ENCODE measurements at regions of chr13 and their contacts with region 1.

Region 1: GRCh38 chr13:46553886-46554858 is 1.2 kb downstream of the LRCH1 start:
- DNase-seq: peak; percentile 95
- ATAC-seq: peak; percentile 67
- H3K4me3 ChIP-seq: peak overlapping the region; percentile 71
- H3K27ac ChIP-seq: peak overlapping the region; percentile 89
- H3K4me1 ChIP-seq: peaks cover 4% of the 10 kb centered on the region
- H3K27me3 ChIP-seq: no peaks in the 10 kb centered on the region
- CTCF ChIP-seq: no peak
- POLR2A ChIP-seq: peak; percentile 38; the same call in 1 of the 2 replicates
- RAD21 ChIP-seq: no peak

Region 2: GRCh38 chr13:46492946-46493345 is 61.2 kb before region 1 on chr13:
- CTCF ChIA-PET with region 1: interaction called, 3 read pairs
- POLR2A ChIA-PET with region 1: no interaction called
- dilution Hi-C with region 1: no loop called
- in situ Hi-C with region 1: no loop called
- intact Hi-C with region 1: loop called (anchors 1 kb)
- DNase-seq: peak; percentile 48
- ATAC-seq: peak; percentile 60
- H3K4me3 ChIP-seq: no peak overlapping the region
- H3K27ac ChIP-seq: no peak overlapping the region
- H3K4me1 ChIP-seq: peaks cover 2% of the 10 kb centered on the region; the same call in 1 of the 2 replicates
- H3K27me3 ChIP-seq: peaks cover 2% of the 10 kb centered on the region
- CTCF ChIP-seq: peak; percentile 68
- POLR2A ChIP-seq: no peak
- RAD21 ChIP-seq: peak; percentile 80

Region 3: DNA sequence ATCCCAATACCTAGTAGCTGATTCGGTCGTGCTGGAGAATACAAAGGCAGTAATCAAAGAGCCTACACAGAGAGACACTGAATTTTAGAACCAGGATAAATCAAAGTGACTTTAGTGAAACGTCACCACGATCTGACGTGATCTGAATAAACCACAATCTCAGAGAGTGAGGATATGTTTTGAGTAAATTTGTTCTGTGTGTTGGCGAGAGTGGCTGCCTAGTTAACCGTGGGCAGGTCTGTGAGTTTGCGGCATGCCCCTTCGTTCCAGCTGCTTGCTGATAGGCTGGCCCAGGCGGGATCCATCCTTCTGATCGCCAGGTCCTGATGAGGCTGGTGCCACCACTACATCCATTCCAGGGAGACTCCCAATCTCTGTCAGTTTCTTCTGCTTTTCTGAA is 39.2 kb after region 1 on chr13:
- CTCF ChIA-PET with region 1: interaction called, 3 read pairs
- POLR2A ChIA-PET with region 1: no interaction called
- dilution Hi-C with region 1: no loop called
- in situ Hi-C with region 1: no loop called
- intact Hi-C with region 1: loop called (anchors 5 kb)
- DNase-seq: no peak
- ATAC-seq: no peak
- H3K4me3 ChIP-seq: no peak overlapping the region
- H3K27ac ChIP-seq: no peak overlapping the region
- H3K4me1 ChIP-seq: peaks cover 5% of the 10 kb centered on the region
- H3K27me3 ChIP-seq: no peaks in the 10 kb centered on the region
- CTCF ChIP-seq: no peak
- POLR2A ChIP-seq: no peak
- RAD21 ChIP-seq: no peak

Region 4: GRCh38 chr13:46614582-46614981 is 60.4 kb after region 1 on chr13:
- CTCF ChIA-PET with region 1: interaction called, 5 read pairs
- POLR2A ChIA-PET with region 1: no interaction called
- dilution Hi-C with region 1: no loop called
- in situ Hi-C with region 1: loop called (anchors 5 kb)
- intact Hi-C with region 1: loop called (anchors 1 kb)
- DNase-seq: peak; percentile 93
- ATAC-seq: peak; percentile 44; the same call in 1 of the 2 replicates
- H3K4me3 ChIP-seq: no peak overlapping the region
- H3K27ac ChIP-seq: no peak overlapping the region
- H3K4me1 ChIP-seq: peaks cover 16% of the 10 kb centered on the region
- H3K27me3 ChIP-seq: no peaks in the 10 kb centered on the region
- CTCF ChIP-seq: peak; percentile 42
- POLR2A ChIP-seq: no peak
- RAD21 ChIP-seq: no peak; the same call in 1 of the 2 replicates

Region 5: GRCh38 chr13:46679369-46680120 is 125.4 kb after region 1 on chr13:
- CTCF ChIA-PET with region 1: interaction called, 3 read pairs
- POLR2A ChIA-PET with region 1: no interaction called
- dilution Hi-C with region 1: no loop called
- in situ Hi-C with region 1: loop called (anchors 10 kb)
- intact Hi-C with region 1: loop called (anchors 5 kb)
- DNase-seq: peak; percentile 70
- ATAC-seq: peak; percentile 78
- H3K4me3 ChIP-seq: peak overlapping the region; percentile 42; the same call in 1 of the 2 replicates
- H3K27ac ChIP-seq: peak overlapping the region; percentile 46; the same call in 1 of the 2 replicates
- H3K4me1 ChIP-seq: peaks cover 9% of the 10 kb centered on the region
- H3K27me3 ChIP-seq: no peaks in the 10 kb centered on the region
- CTCF ChIP-seq: peak; percentile 24
- POLR2A ChIP-seq: no peak
- RAD21 ChIP-seq: no peak; the same call in 1 of the 2 replicates

Region 6: DNA sequence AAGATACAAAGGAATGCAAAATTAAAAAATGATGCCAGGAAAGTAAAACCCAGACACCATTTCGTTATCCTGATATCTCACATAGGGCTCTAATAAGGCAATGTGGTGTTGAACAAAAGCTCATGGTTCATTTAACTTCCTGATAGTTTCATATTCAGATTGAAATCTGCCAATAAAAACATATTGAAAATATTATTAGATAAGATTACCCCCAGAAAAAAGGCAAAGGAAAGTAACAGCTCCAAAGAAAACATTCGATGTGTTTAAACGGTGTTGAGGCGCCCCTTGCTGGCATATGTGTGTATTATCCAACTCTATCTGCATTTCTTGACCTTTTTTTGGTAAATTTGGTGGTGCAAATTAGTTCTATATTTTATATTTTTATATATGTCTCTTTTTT is 166.9 kb after region 1 on chr13:
- CTCF ChIA-PET with region 1: interaction called, 17 read pairs
- POLR2A ChIA-PET with region 1: no interaction called
- dilution Hi-C with region 1: no loop called
- in situ Hi-C with region 1: no loop called
- intact Hi-C with region 1: loop called (anchors 1 kb)
- DNase-seq: peak; percentile 53
- ATAC-seq: peak; percentile 74
- H3K4me3 ChIP-seq: no peak overlapping the region
- H3K27ac ChIP-seq: no peak overlapping the region
- H3K4me1 ChIP-seq: peaks cover 1% of the 10 kb centered on the region; the same call in 1 of the 2 replicates
- H3K27me3 ChIP-seq: no peaks in the 10 kb centered on the region
- CTCF ChIP-seq: peak; percentile 76
- POLR2A ChIP-seq: no peak
- RAD21 ChIP-seq: peak; percentile 86

Region 7: GRCh38 chr13:46796515-46797474 is 242.6 kb after region 1 on chr13 and contains the start of gene ESD:
- CTCF ChIA-PET with region 1: no interaction called
- POLR2A ChIA-PET with region 1: no interaction called
- dilution Hi-C with region 1: no loop called
- in situ Hi-C with region 1: no loop called
- intact Hi-C with region 1: loop called (anchors 1 kb)
- DNase-seq: peak; percentile 87
- ATAC-seq: peak; percentile 98
- H3K4me3 ChIP-seq: peak within 1 kb of the TSS; percentile 84
- H3K27ac ChIP-seq: peak within 1 kb of the TSS; percentile 94
- H3K4me1 ChIP-seq: peaks cover 5% of the 10 kb centered on the region
- H3K27me3 ChIP-seq: no peaks in the 10 kb centered on the region
- CTCF ChIP-seq: no peak
- POLR2A ChIP-seq: 0 out of 2 replicates have a peak, but pooled peaks have one; percentile 36
- RAD21 ChIP-seq: no peak
- total RNA-seq, gene ESD: 108 and 135 TPM in 2 replicates